Tibial artery (tissue), 4 donors: ENCODE measurements at regions of chr13 and their contacts with region 1.

Region 1: DNA sequence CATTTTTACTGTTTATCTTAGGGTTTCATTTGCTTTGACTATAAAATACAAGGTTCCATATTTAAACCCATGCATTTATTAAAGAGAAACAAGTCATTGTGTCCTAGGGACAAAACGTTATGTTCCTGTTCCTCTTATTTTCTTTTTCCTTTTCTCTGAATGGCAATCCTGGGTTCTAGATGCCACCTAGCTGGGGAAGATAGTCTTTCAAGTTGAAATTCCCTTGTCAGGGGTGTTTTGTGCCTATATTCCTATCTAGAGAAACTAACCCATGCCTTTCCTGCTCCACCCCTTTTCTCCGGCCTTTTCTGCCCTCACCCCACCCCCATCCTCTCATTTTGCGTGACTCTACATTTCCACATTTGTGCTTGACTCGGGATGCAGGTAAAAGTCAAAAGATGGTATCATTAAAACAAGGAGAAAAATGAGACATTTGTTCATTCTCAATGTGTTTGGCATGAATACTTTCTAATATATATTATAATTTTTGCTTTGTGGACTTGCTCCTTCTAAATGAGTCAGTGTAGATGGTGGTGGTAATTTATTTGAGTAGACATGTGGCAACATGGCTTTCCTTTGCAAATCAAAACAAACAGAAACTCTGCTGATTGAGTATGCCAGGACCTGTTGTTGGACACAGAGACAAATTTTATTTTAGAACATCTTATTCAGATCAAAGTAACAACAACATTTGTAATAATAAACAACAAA is 26.8 kb upstream of the STARD13 start:
- DNase-seq: no peak
- H3K4me3 ChIP-seq: no peak overlapping the region
- H3K27ac ChIP-seq: peak overlapping the region in 1 of 2 donors; percentile 51
- H3K4me1 ChIP-seq: peaks cover 0 to 14% (median 3%) of the 10 kb centered on the region in 4 donors
- H3K27me3 ChIP-seq: no peaks in the 10 kb centered on the region
- CTCF ChIP-seq: peak; percentile 44 to 58

Region 2: GRCh38 chr13:33228648-33229445 is 83.5 kb before region 1 on chr13:
- intact Hi-C with region 1: loop called (anchors 10 kb)
- DNase-seq: no peak
- H3K4me3 ChIP-seq: no peak overlapping the region
- H3K27ac ChIP-seq: peak overlapping the region in 1 of 2 donors; percentile 13
- H3K4me1 ChIP-seq: peaks cover 0 to 41% (median 18%) of the 10 kb centered on the region in 4 donors
- H3K27me3 ChIP-seq: no peaks in the 10 kb centered on the region
- CTCF ChIP-seq: peak; percentile 83 to 89

Region 3: GRCh38 chr13:33401238-33401637 is 88.9 kb after region 1 on chr13:
- intact Hi-C with region 1: no loop called
- DNase-seq: no peak
- H3K4me3 ChIP-seq: no peak overlapping the region
- H3K27ac ChIP-seq: no peak overlapping the region
- H3K4me1 ChIP-seq: no peaks in the 10 kb centered on the region
- H3K27me3 ChIP-seq: no peaks in the 10 kb centered on the region
- CTCF ChIP-seq: no peak